Dorsolateral prefrontal cortex (tissue), 120 donors: ENCODE measurements at regions of chr11 and their contacts with region 1.

Region 1: DNA sequence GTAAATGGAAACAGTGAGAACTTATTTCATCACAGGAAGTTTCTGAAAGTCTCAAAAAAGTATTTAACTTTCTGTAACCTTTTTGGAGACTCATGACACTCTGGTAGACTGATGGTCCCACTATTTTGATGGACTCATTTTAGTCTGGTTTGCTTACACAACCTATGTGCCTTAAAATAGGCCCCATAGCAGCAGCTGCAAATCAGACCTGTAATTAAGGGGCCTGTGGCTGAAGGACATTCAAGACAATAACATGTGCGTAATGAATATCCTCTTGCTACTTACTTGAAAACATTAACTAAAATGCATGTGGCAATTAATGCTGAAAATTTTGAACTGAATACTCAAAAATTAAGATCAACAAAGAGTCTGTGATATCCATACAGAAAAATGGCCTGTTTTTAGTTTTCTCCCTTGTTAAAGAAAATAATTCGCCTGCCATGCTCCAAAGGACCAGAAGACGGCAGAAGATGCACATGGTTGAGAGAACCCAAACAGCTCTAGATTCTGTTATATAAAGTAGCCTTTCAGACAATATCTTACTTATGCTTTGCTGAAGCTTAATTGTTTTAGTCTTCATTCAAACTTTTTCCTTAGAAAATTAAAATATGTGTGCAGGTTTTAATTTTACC is 568.5 kb downstream of the KCNA4 start:
- DNase-seq: peak in 2 of 10 donors; percentile 43 to 53
- H3K4me3 ChIP-seq: no peak overlapping the region
- H3K27ac ChIP-seq: no peak overlapping the region
- H3K27me3 ChIP-seq: no peaks in the 10 kb centered on the region
- CTCF ChIP-seq: peak; percentile 37 to 82 (median 64)

Region 2: DNA sequence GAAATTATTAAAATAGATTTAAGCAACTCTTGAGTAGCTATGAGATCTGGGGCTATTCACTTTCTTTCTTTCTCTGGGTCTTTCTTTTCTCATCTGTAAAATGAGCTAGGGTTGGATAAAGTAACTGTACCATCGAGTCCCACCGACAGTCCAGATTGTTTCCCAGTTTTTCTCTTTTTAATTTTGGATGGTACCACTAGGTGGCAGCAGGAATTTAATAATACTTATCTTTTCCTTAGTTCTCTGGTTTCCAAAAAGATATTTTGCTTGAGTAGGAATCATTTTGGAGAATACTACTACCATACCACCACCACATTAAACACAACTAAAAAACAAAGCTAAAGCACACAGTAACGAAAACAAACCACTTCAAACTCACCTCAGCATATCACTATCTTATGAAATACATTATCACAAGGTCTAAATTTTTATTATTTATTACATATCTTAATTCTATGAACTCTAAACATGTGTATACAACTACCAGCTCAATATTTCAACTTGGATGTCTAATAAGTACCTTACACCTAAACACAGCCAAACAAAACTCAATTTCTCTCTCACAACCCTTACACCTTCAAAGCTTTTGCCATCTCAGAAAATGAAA is 15.5 kb before region 1 on chr11:
- intact Hi-C with region 1: loop called in 1 of 2 experiments (anchors 1 kb)
- DNase-seq: no peak
- H3K4me3 ChIP-seq: no peak overlapping the region
- H3K27ac ChIP-seq: no peak overlapping the region
- H3K27me3 ChIP-seq: peaks cover 0 to 7% (median 0%) of the 10 kb centered on the region in 45 donors
- CTCF ChIP-seq: peak; percentile 35 to 79 (median 65)

Region 3: GRCh38 chr11:29645373-29645772 is 197.0 kb after region 1 on chr11:
- intact Hi-C with region 1: no loop called
- DNase-seq: no peak
- H3K4me3 ChIP-seq: no peak overlapping the region
- H3K27ac ChIP-seq: no peak overlapping the region
- H3K27me3 ChIP-seq: no peaks in the 10 kb centered on the region
- CTCF ChIP-seq: no peak

Region 4: GRCh38 chr11:30143098-30143705 is 694.8 kb after region 1 on chr11:
- intact Hi-C with region 1: loop called in 1 of 2 experiments (anchors 5 kb)
- DNase-seq: no peak
- H3K4me3 ChIP-seq: no peak overlapping the region
- H3K27ac ChIP-seq: no peak overlapping the region
- H3K27me3 ChIP-seq: no peaks in the 10 kb centered on the region
- CTCF ChIP-seq: peak; percentile 56 to 82 (median 72)

Region 5: DNA sequence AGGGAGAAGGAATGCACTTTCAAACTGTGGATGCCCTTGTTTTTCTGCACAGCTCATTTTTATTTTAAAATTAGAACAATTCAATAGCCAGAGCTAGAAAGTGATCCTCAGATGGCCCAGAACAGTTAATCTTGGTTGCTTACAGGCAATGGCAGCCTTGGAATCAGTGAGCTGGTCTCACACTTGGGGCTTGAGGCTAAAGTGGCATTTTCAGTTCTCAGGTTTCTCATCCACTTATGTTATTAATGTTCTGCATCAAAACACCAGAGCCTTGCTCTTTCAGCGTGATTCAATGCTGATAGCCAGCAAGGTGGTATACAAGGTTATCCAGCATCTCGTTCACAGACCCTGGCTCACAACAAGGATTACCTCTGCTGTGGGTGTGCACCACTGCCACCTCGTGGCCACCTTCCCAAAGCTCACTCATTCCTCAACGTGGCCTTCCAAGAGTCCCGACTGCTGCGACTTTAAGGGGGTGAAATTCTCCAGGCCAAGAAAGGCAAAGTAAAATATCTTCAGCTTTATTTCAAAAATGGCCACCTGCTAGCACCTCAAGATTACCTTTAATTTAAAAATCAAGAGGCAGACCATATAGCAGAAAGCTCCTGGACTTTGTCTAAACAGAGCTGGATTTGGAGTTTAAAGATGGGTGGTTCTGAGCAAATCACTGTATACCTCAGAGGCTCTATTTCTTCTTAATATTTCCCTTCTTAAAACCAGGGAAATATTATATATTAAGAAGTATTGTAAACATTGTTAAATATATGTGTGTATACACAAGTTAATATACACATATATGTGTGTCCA is 748.2 kb after region 1 on chr11:
- intact Hi-C with region 1: loop called in 1 of 2 experiments (anchors 5 kb)
- DNase-seq: peak; percentile 21 to 76 (median 66)
- H3K4me3 ChIP-seq: no peak overlapping the region
- H3K27ac ChIP-seq: no peak overlapping the region
- H3K27me3 ChIP-seq: no peaks in the 10 kb centered on the region
- CTCF ChIP-seq: peak; percentile 44 to 81 (median 68)

Region 6: GRCh38 chr11:30304620-30305019 is 856.3 kb after region 1 on chr11:
- intact Hi-C with region 1: loop called in 1 of 2 experiments (anchors 10 kb)
- DNase-seq: no peak
- H3K4me3 ChIP-seq: no peak overlapping the region
- H3K27ac ChIP-seq: no peak overlapping the region
- H3K27me3 ChIP-seq: peaks cover 0 to 3% (median 0%) of the 10 kb centered on the region in 45 donors
- CTCF ChIP-seq: no peak

Region 7: DNA sequence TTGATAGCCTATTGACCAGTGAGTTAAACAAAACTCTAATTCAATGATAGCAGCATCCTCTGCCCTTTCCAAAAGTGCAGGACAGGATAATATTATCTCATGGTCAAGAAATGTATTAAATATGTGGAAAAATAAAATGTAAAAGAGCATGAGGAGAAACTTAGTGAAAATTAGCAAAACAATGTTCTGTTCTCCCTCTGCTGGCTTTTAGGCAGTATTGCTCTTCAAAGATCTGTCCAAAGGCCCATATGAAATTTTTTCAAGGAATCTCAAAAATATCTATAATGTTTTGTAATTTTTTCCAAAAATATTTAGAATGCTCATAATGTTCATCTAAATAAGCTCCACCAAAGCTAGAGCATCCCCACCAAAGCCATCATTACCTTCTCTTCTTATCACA is 866.3 kb after region 1 on chr11:
- intact Hi-C with region 1: loop called (anchors 10 kb)
- DNase-seq: no peak
- H3K4me3 ChIP-seq: no peak overlapping the region
- H3K27ac ChIP-seq: no peak overlapping the region
- H3K27me3 ChIP-seq: peaks cover 0 to 13% (median 0%) of the 10 kb centered on the region in 45 donors
- CTCF ChIP-seq: peak in 53 of 56 donors; percentile 19 to 67 (median 49)